K562 (cell line): ENCODE measurements at regions of chr2 and their contacts with region 1.

Region 1: GRCh38 chr2:241950413-241951315 is 81.1 kb downstream of the RTP5 start:
- DNase-seq: peak; percentile 71 to 74 (median 74)
- ATAC-seq: peak; percentile 96
- H3K4me3 ChIP-seq: no peak overlapping the region
- H3K27ac ChIP-seq: no peak overlapping the region
- H3K4me1 ChIP-seq: peaks cover 0 to 17% of the 10 kb centered on the region in 2 experiments; a peak in 2 of 5 replicates
- H3K27me3 ChIP-seq: peaks cover 0 to 7% of the 10 kb centered on the region in 2 experiments; a peak in 1 of 5 replicates
- CTCF ChIP-seq: peak; percentile 79 to 84 (median 80)
- EP300 ChIP-seq: no peak
- POLR2A ChIP-seq: no peak
- RAD21 ChIP-seq: peak; percentile 79 to 87

Region 2: GRCh38 chr2:241844066-241844728 is 106.5 kb before region 1 on chr2:
- CTCF ChIA-PET with region 1: no interaction called
- POLR2A ChIA-PET with region 1: no interaction called
- in situ Hi-C with region 1: no loop called
- intact Hi-C with region 1: no loop called
- DNase-seq: peak; percentile 81 to 87 (median 84)
- ATAC-seq: peak; percentile 98
- H3K4me3 ChIP-seq: peak overlapping the region; percentile 33
- H3K27ac ChIP-seq: peak overlapping the region; percentile 74
- H3K4me1 ChIP-seq: peaks cover 8 to 42% of the 10 kb centered on the region in 2 experiments
- H3K27me3 ChIP-seq: no peaks in the 10 kb centered on the region
- CTCF ChIP-seq: peak in 2 of 3 experiments; percentile 17 to 46; a peak in 2 of 6 replicates
- EP300 ChIP-seq: no peak
- POLR2A ChIP-seq: peak; percentile 53; the same call in 1 of the 2 replicates
- RAD21 ChIP-seq: peak in 1 of 2 experiments; percentile 24; a peak in 2 of 4 replicates

Region 3: GRCh38 chr2:241865957-241866789 is 84.5 kb before region 1 on chr2:
- CTCF ChIA-PET with region 1: no interaction called
- POLR2A ChIA-PET with region 1: no interaction called
- in situ Hi-C with region 1: no loop called
- intact Hi-C with region 1: no loop called
- DNase-seq: peak in 1 of 4 experiments; percentile 51
- ATAC-seq: peak; percentile 69
- H3K4me3 ChIP-seq: no peak overlapping the region
- H3K27ac ChIP-seq: no peak overlapping the region; the same call in 2 of the 3 replicates
- H3K4me1 ChIP-seq: peaks cover 5 to 46% of the 10 kb centered on the region in 2 experiments; a peak in 2 of 5 replicates
- H3K27me3 ChIP-seq: peaks cover 4 to 63% of the 10 kb centered on the region in 2 experiments; a peak in 4 of 5 replicates
- CTCF ChIP-seq: peak in 2 of 3 experiments; percentile 11 to 21; a peak in 1 of 6 replicates
- EP300 ChIP-seq: no peak
- POLR2A ChIP-seq: no peak
- RAD21 ChIP-seq: no peak

Region 4: DNA sequence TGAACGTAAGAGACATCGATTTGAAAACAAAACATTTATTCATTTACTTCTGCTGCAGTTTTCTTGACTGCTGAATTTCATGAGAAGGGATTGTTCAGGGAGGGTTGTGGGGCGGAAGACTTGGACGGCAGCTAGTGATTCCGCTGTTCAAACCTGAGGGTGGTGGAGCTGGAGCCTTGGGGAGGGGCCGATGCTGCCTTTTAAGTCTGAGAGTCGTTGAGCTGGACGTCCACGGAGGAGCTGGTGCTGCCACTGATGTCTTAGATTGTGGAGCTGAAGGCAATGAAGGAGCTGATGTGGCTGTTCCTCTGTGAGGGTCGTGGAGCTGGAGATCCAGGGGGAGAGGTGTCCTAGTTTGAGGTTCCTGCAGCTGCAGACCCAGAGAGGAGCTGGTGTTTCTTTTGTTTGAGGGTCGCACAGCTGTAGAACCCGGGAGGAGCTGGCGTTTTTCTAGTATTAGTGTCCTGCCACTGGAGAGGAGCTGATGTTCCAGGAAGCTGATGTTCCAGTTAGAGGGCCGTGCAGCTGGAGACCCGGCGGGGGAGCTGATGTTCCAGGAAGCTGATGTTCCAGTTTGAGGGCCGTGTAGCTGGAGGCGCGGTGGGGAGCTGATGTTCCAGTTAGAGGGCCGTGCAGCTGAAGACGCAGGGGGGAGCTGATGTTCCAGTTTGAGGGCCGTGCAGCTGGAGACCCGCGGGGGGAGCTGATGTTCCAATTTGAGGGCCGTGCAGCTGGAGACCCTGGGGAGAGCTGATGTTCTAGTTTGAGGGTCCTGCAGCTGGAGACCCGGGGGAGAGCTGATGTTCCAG is 69.7 kb after region 1 on chr2:
- CTCF ChIA-PET with region 1: no interaction called
- POLR2A ChIA-PET with region 1: interaction called, 3 read pairs
- in situ Hi-C with region 1: no loop called
- intact Hi-C with region 1: loop called (anchors 5 kb)
- DNase-seq: peak in 1 of 4 experiments; percentile 44
- ATAC-seq: peak; percentile 79
- H3K4me3 ChIP-seq: no peak overlapping the region
- H3K27ac ChIP-seq: no peak overlapping the region
- H3K4me1 ChIP-seq: no peaks in the 10 kb centered on the region; a peak in 2 of 5 replicates
- H3K27me3 ChIP-seq: peaks cover 3 to 64% of the 10 kb centered on the region in 2 experiments; a peak in 4 of 5 replicates
- CTCF ChIP-seq: peak; percentile 30 to 70 (median 49); a peak in 4 of 6 replicates
- EP300 ChIP-seq: no peak
- POLR2A ChIP-seq: no peak
- RAD21 ChIP-seq: peak; percentile 16 to 62; a peak in 2 of 4 replicates